GM10248 (cell line): ENCODE measurements at regions of chr1 and their contacts with region 1.

Region 1: DNA sequence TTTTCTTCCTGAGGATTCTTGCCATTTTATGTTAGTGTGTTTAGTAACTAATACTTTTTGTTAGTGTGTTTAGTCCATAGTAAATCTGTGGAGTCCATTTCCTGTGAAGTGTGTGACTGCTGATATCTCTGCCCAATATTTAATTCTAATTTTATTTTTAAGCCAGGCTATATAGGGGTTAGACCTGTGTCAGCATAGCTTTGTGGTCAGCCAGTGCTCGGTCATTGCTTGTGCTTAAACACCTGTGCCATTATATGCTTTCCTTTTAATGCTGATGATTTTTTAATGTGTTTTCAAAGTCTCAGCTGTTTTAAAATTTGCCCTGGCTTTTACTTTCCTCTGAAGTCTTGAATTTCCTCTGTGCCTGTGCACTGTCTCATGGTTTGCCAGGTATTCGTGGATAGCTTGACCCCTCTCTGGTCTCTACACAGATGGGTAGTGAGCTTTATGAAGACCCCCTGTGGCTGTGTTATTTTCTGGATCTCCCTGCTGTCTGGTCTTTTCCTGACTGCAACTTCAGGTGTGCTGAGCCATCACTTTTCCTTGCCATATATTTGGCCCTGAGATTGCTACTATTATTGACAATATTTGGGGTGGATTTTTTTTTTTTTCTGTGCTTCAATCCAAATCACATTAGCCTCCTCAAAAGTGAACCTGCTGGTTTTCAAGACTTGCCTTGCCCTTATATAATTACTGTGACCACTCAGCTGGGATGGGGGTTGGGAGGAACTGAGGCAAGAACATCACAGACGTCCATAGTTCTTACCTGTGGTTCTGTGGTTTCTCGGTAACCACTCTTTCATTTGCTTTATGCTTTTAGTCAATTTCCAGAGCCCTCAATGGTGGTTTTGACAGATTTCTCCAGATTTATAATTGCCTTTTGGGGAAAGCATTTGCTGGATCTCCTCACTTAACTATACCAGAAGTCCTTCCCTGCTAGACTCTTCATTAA is 59.6 kb downstream of the RPS6KC1 start:
- DNase-seq: peak; percentile 15
- CTCF ChIP-seq: no peak

Region 2: DNA sequence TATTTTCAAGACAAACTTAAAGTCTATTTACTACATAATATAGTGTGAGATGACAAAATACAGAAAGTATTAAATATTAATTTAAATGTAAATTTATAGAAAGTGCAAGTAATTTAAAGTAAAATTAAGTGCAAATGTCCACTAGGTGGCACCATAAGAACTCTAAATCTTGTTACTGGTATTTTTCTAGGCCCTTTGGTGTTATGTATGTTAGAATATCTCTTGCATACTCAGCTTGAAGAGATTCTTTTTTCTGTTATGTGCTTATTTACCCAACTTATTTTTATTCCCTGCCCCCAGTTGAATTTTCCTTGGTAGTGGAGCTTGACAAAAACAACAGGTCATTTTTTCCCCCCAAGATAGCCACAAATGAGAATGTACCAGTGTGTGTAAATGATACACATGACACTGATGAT is 11.9 kb after region 1 on chr1:
- CTCF ChIA-PET with region 1: interaction called, 23 read pairs
- POLR2A ChIA-PET with region 1: no interaction called
- DNase-seq: no peak
- CTCF ChIP-seq: peak; percentile 28

Region 3: DNA sequence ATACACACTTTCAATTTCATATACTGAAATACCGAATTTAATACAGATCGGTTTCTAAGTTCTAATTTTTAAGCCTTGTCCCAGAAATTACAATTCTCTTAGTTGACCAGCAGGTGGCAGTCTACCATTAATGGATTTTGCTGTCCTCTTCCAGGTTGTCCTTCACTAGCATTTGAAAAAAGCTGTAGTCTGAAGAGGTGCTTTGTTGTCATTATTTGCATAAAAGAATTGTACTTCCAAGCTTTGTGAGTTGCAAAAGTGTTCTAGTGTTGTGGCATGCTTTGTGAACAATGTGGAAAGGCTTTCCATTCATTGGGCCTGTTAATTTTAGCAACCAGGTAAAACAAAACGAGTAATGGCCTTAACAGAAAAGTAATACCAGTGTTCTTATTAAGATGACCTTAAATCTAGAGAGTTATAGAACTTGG is 134.1 kb after region 1 on chr1:
- CTCF ChIA-PET with region 1: no interaction called
- POLR2A ChIA-PET with region 1: no interaction called
- DNase-seq: peak; percentile 25
- CTCF ChIP-seq: peak; percentile 63